Naive thymus-derived CD4-positive, alpha-beta T cell (primary cell): ENCODE measurements at regions of chr2 and their contacts with region 1.

Region 1: DNA sequence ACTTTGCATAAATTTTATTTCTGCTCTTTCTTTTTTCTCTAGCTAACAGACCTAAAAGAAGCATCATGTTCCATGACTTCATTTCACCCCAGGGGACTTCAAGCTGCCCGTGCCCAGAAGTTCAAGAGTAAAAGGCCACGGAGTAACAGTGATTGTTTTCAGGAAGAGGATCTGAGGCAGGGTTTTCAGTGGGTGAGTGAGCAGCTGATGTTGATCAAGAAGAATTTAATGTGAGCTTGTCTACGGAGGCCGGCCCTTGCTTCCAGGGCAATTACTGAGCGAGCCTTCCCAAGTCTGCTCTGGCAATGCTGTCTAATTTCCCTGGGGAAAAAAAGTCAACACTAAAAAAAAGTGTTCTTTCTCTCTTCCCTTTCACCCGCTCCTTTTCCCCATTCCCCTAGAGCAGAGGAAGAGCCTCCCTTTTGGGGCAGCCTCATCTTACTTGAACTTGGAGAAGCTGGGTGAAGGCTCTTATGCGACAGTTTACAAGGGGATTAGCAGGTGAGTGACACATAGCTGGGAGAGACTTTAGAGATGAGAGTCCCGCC is 1.2 kb downstream of the CDK15 start:
- DNase-seq: no peak
- ATAC-seq: no peak
- H3K4me3 ChIP-seq: no peak overlapping the region
- H3K4me3 Mint-ChIP-seq: no peak overlapping the region
- H3K27ac ChIP-seq: no peak overlapping the region
- H3K27ac Mint-ChIP-seq: peak overlapping the region in 1 of 9 donors; percentile 49
- H3K4me1 ChIP-seq: no peaks in the 10 kb centered on the region
- H3K4me1 Mint-ChIP-seq: no peaks in the 10 kb centered on the region
- H3K27me3 ChIP-seq: no peaks in the 10 kb centered on the region
- H3K27me3 Mint-ChIP-seq: peaks cover 16 to 44% (median 17%) of the 10 kb centered on the region in 5 donors

Region 2: DNA sequence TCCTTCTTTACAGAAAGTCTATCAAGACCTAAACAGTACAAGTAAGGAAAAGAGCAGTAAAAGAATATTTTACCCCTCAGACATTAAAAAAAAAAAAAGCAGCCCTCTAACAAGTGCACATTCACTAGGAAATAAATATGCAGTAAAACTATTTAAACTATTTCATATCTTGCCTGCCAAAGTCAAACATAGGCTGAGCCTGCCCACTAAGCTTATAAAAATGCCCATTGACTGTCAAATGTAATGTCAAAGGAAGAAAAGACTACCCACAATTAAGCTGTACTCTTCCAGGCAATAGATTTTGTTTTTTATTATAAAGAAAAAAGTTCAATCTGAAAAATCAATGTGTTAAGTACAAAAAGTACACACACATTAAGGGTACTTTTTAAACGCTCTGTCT is 38.6 kb before region 1 on chr2:
- CTCF ChIA-PET with region 1: no interaction called
- POLR2A ChIA-PET with region 1: no interaction called
- intact Hi-C with region 1: loop called in 1 of 2 experiments (anchors 5 kb)
- DNase-seq: no peak
- ATAC-seq: no peak
- H3K4me3 ChIP-seq: no peak overlapping the region
- H3K4me3 Mint-ChIP-seq: no peak overlapping the region
- H3K27ac ChIP-seq: no peak overlapping the region
- H3K27ac Mint-ChIP-seq: no peak overlapping the region
- H3K4me1 ChIP-seq: no peaks in the 10 kb centered on the region
- H3K4me1 Mint-ChIP-seq: peaks cover 0 to 9% (median 0%) of the 10 kb centered on the region in 7 donors
- H3K27me3 ChIP-seq: no peaks in the 10 kb centered on the region
- H3K27me3 Mint-ChIP-seq: peaks cover 0 to 2% (median 0%) of the 10 kb centered on the region in 5 donors